A549 (cell line): ENCODE measurements at regions of chr12 and their contacts with region 1.

Region 1: GRCh38 chr12:76158518-76159321 is 74.2 kb upstream of the NAP1L1 start:
- DNase-seq: peak; percentile 75 to 80
- ATAC-seq: peak; percentile 100
- H3K4me3 ChIP-seq: no peak overlapping the region
- H3K27ac ChIP-seq: peak overlapping the region in 1 of 2 experiments; percentile 72; a peak in 3 of 6 replicates
- H3K4me1 ChIP-seq: no peaks in the 10 kb centered on the region
- CTCF ChIP-seq: peak; percentile 75
- EP300 ChIP-seq: no peak
- POLR2A ChIP-seq: no peak
- RAD21 ChIP-seq: peak; percentile 76

Region 2: DNA sequence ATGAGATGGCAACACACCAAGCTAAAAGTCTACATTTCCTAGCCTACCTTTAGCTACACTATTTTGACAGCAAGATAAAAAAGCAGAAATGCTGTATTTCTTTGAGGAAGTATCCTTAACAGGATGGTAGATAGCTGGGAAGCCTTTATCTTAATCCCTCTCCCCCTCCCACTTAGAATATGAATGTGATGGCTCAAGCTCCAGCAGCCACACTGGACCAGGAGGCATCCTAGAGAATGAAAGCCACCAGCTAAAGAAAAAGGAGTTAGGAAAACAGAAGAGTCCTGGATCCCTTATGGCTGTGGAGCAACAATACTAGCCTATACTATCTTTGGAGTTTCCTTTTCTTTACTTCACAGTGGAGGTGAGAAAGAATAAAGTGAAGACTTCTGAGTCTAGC is 89.4 kb before region 1 on chr12:
- CTCF ChIA-PET with region 1: no interaction called
- POLR2A ChIA-PET with region 1: no interaction called
- DNase-seq: no peak
- ATAC-seq: peak; percentile 31 to 32; a peak in 5 of 6 replicates
- H3K4me3 ChIP-seq: no peak overlapping the region
- H3K27ac ChIP-seq: no peak overlapping the region
- H3K4me1 ChIP-seq: peaks cover 51% of the 10 kb centered on the region
- CTCF ChIP-seq: no peak
- EP300 ChIP-seq: no peak
- POLR2A ChIP-seq: no peak
- RAD21 ChIP-seq: no peak

Region 3: GRCh38 chr12:76117067-76117695 is 41.5 kb before region 1 on chr12:
- CTCF ChIA-PET with region 1: no interaction called
- POLR2A ChIA-PET with region 1: no interaction called
- DNase-seq: no peak
- ATAC-seq: peak; percentile 53 to 56; a peak in 5 of 6 replicates
- H3K4me3 ChIP-seq: no peak overlapping the region
- H3K27ac ChIP-seq: no peak overlapping the region
- H3K4me1 ChIP-seq: no peaks in the 10 kb centered on the region
- CTCF ChIP-seq: no peak
- EP300 ChIP-seq: no peak
- POLR2A ChIP-seq: no peak
- RAD21 ChIP-seq: no peak

Region 4: GRCh38 chr12:76144245-76144549 is 14.5 kb before region 1 on chr12:
- CTCF ChIA-PET with region 1: interaction called, 11 read pairs
- POLR2A ChIA-PET with region 1: no interaction called
- DNase-seq: peak in 1 of 2 experiments; percentile 11
- ATAC-seq: no peak
- H3K4me3 ChIP-seq: no peak overlapping the region
- H3K27ac ChIP-seq: no peak overlapping the region
- H3K4me1 ChIP-seq: no peaks in the 10 kb centered on the region
- CTCF ChIP-seq: no peak
- EP300 ChIP-seq: no peak
- POLR2A ChIP-seq: no peak
- RAD21 ChIP-seq: no peak

Region 5: DNA sequence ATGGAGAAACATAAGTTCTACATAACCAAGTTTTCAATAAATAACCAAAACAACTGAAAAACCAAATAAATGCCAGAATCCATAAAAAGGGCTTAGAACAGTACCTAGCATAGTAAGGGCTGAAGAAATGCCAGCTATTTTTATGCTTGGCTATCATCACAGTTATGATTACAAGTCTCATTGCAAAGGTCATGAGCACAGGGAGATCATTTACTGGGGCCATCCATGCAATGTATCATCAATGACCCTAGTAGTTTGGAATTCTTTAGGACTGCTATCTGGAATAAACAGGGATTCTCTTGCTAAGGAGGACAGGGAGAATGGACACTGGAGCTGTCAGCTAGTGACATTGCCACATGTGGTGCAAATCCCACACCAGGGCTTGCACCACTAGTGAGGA is 18.2 kb after region 1 on chr12:
- CTCF ChIA-PET with region 1: interaction called, 21 read pairs
- POLR2A ChIA-PET with region 1: no interaction called
- DNase-seq: no peak
- ATAC-seq: no peak; a peak in 1 of 6 replicates
- H3K4me3 ChIP-seq: no peak overlapping the region
- H3K27ac ChIP-seq: no peak overlapping the region
- H3K4me1 ChIP-seq: no peaks in the 10 kb centered on the region
- CTCF ChIP-seq: no peak
- EP300 ChIP-seq: no peak
- POLR2A ChIP-seq: no peak
- RAD21 ChIP-seq: no peak